Colonic mucosa (tissue), 4 donors: ENCODE measurements at regions of chr10 and their contacts with region 1.

Region 1: DNA sequence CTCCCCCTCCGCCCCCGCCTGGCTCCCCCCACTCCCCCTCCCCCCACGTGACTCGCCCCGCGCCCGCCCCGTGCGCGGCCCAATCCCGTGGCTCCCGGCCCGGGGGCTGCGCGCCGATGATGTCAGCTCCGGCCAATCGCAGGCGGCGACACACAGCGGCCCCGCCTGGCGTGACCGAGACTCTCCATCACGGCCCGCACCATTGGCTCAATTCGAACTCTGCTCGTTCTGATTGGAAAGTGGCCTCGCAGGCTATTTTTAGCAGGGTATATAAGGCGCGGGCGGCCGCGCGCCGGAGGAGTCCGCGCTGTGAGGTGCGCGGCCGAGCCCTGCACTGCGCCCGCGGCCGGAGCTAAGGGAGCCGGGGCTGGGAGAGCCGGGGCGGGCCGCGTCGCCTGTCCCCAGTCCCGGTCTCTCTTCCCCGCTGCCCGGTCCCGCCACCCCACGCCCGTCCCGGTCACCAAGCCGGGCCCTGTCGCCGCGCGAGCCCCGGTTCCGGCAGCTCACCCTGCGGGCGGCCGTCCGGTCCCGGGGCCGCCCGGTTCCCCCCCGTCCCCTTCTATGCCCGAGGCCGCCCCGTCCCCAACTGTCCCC is 345 bp upstream of the KLF6 start:
- DNase-seq: peak; percentile 99
- H3K4me3 ChIP-seq: peak overlapping the region; percentile 89
- H3K27ac ChIP-seq: peak overlapping the region; percentile 100
- H3K4me1 ChIP-seq: peaks cover 5% of the 10 kb centered on the region
- H3K27me3 ChIP-seq: no peaks in the 10 kb centered on the region
- CTCF ChIP-seq: no peak

Region 2: DNA sequence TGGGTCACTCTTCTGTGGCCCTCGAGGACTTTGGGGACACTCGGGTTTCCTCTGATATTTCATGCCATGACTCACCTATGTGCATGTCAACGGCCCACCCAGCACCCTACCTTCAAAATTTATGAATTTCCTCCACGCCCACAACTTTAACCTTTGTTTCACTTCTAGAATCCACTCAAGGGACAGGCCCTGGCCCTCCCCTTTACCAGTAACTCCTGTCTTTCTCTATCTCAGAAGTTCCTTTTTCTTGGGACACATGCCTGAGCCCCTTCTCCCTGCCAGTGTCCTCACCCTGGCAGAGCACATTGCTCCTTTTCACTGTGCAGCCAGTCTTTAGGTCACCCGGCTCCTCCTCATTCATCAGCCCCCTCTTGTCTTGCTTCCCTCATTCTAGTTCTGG is 282.2 kb after region 1 on chr10:
- intact Hi-C with region 1: loop called (anchors 10 kb)
- DNase-seq: peak; percentile 76
- H3K4me3 ChIP-seq: no peak overlapping the region
- H3K27ac ChIP-seq: peak overlapping the region; percentile 82
- H3K4me1 ChIP-seq: no peaks in the 10 kb centered on the region
- H3K27me3 ChIP-seq: no peaks in the 10 kb centered on the region
- CTCF ChIP-seq: no peak